H1 (cell line): ENCODE measurements at regions of chr19 and their contacts with region 1.

Region 1: GRCh38 chr19:4583961-4584669 is 24.6 kb upstream of the SEMA6B start:
- DNase-seq: peak in 1 of 2 experiments; percentile 95
- H3K4me3 ChIP-seq: peak overlapping the region; percentile 38 to 77 (median 67)
- H3K27ac ChIP-seq: no peak overlapping the region
- H3K4me1 ChIP-seq: peaks cover 0 to 8% (median 5%) of the 10 kb centered on the region in 4 experiments; a peak in 6 of 7 replicates
- H3K27me3 ChIP-seq: peaks cover 0 to 12% (median 8%) of the 10 kb centered on the region in 4 experiments; a peak in 4 of 7 replicates
- CTCF ChIP-seq: no peak
- EP300 ChIP-seq: no peak
- POLR2A ChIP-seq: 0 out of 3 replicates have a peak, but pooled peaks of 1 of the 2 experiments have one; percentile 11
- RAD21 ChIP-seq: no peak

Region 2: GRCh38 chr19:4548238-4548584 is 35.9 kb before region 1 on chr19:
- CTCF ChIA-PET with region 1: no interaction called
- POLR2A ChIA-PET with region 1: no interaction called
- DNase-seq: no peak
- H3K4me3 ChIP-seq: no peak overlapping the region
- H3K27ac ChIP-seq: no peak overlapping the region
- H3K4me1 ChIP-seq: no peaks in the 10 kb centered on the region; a peak in 1 of 7 replicates
- H3K27me3 ChIP-seq: no peaks in the 10 kb centered on the region
- CTCF ChIP-seq: no peak
- EP300 ChIP-seq: no peak
- POLR2A ChIP-seq: no peak
- RAD21 ChIP-seq: no peak

Region 3: GRCh38 chr19:4597975-4598671 is 14.0 kb after region 1 on chr19:
- CTCF ChIA-PET with region 1: interaction called, 14 read pairs
- POLR2A ChIA-PET with region 1: interaction called, 8 read pairs
- DNase-seq: peak in 1 of 2 experiments; percentile 91
- H3K4me3 ChIP-seq: peak overlapping the region; percentile 52 to 70 (median 54)
- H3K27ac ChIP-seq: no peak overlapping the region
- H3K4me1 ChIP-seq: peaks cover 0 to 9% (median 4%) of the 10 kb centered on the region in 4 experiments; a peak in 5 of 7 replicates
- H3K27me3 ChIP-seq: peaks cover 3 to 9% (median 8%) of the 10 kb centered on the region in 4 experiments; a peak in 6 of 7 replicates
- CTCF ChIP-seq: 0 out of 4 replicates have a peak, but pooled peaks of 1 of the 3 experiments have one; percentile 0
- EP300 ChIP-seq: no peak
- POLR2A ChIP-seq: no peak
- RAD21 ChIP-seq: no peak

Region 4: DNA sequence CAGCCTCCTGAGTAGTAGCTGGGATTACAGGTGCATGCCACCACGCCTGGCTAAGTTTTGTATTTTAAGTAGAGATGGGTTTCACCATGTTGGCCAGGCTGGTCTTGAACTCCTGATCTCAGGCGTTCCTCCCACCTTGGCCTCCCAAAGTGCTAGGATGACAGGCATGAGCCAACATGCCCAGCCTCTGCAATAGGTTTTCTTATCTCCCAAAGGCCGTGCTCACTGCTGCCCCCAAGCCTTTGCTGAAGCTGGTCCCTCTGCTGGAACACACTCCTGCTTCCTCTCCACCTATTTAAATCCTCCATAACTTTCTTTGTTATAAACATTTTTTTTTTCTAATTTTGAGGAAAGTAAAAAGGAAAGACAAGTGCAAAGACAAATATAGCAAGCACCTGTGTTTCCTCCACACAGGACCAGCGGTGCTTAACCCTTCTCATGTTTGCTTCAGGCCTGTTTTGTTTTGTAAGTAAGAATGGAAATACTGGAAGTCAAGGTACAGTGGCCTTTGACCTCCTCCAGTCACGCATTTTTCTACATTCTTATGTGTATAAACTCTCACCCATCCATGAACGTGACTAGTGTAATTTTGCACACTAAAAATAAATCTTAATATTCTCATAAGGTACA is 40.7 kb after region 1 on chr19:
- CTCF ChIA-PET with region 1: interaction called, 13 read pairs
- POLR2A ChIA-PET with region 1: no interaction called
- DNase-seq: no peak
- H3K4me3 ChIP-seq: no peak overlapping the region
- H3K27ac ChIP-seq: no peak overlapping the region
- H3K4me1 ChIP-seq: no peaks in the 10 kb centered on the region; a peak in 2 of 7 replicates
- H3K27me3 ChIP-seq: no peaks in the 10 kb centered on the region
- CTCF ChIP-seq: peak; percentile 54 to 67 (median 65)
- EP300 ChIP-seq: no peak
- POLR2A ChIP-seq: no peak
- RAD21 ChIP-seq: peak; percentile 19 to 35; a peak in 2 of 4 replicates